ENCODE measurements at regions of chr7 and their contacts with region 1.

Region 1: DNA sequence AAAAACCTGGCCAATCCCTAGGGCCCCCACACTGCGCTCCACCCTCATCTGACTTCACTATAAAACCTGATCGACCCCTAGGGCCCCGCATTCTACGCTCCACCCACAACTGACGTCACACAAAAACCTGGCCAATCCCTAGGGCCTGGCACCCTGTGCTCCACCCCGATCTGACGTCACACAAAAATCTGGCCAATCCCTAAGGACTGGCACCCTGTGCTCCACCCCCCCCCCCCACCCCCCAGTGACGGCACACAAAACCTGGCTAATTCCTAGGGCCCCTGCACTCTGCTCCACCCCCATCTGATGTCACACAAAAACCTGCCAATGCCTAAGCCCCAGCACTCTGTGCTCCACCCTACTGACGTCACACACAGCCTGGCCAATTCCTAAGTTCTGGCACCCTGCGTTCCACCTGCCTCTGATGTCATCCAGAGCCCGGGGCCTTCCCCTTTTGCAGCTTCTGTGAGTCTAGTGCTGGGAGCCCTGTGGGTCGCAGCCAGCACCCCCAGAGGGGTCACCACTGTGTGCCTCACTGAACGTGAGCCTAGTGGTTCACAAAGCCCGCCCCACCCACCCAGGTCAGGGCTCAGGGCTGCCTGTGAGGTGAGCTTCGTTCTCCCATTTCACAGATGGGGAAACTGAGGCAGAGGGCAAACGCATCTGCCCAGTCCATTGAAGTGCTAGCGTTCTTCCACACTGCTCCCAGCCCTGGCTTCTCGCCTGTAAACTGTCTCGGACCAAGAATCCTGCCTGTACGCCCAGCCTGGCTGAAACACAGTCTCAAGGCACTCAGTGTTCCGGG is 40.6 kb downstream of the MICALL2 start:
- DNase-seq: no peak
- H3K4me3 Mint-ChIP-seq: no peak overlapping the region
- H3K27ac Mint-ChIP-seq: no peak overlapping the region
- H3K4me1 Mint-ChIP-seq: peaks cover 24% of the 10 kb centered on the region
- H3K27me3 Mint-ChIP-seq: peaks cover 25% of the 10 kb centered on the region

Region 2: DNA sequence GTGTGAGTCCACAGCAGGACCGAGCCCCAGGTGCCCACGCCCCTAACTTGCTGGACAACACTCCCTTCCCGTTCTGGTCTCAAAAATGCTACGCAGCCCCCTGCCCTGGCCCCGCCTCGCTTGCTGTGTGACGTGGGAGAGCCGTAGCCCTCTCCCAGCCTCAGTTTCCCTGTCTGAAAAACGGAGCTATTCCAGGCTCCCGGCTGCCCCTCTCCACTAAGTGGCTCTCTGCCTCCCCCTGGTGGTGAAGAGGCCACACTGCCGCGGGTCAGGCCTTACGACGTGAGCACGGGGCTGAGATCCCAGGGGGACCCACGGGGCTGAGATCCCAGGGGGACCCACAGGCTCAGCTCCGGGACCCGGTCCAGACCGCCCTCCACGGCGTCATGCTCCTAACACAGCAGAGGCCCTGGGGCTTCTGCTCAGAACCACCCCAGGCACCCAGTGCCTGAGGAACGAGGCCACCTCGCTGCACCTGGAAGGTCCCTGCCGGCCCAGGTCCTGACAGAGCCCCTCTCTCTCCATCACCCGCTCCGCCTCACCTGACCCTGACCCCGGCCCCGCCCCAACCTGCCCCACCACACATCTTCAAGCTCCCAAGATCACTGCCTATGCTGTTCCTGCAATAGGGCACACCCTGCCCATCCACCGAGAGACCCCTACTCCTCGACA is 13.8 kb after region 1 on chr7:
- CTCF ChIA-PET with region 1: interaction called, 14 read pairs
- POLR2A ChIA-PET with region 1: interaction called, 3 read pairs
- DNase-seq: peak; percentile 80
- H3K4me3 Mint-ChIP-seq: no peak overlapping the region
- H3K27ac Mint-ChIP-seq: no peak overlapping the region
- H3K4me1 Mint-ChIP-seq: peaks cover 3% of the 10 kb centered on the region
- H3K27me3 Mint-ChIP-seq: peaks cover 2% of the 10 kb centered on the region

Measured in activated CD4-positive, alpha-beta memory T cell treated with anti-CD3 and anti-CD28 coated beads, Interleukin-2, amount 10 ng/mL, durations not matched to agents 7 days and 5 days (primary cell).